ENCODE measurements at regions of chr11 and their contacts with region 1.

Region 1: GRCh38 chr11:6531267-6531752 is 34.2 kb downstream of the DNHD1 start:
- DNase-seq: no peak
- H3K4me3 ChIP-seq: no peak overlapping the region
- H3K27ac ChIP-seq: no peak overlapping the region; the same call in 1 of the 2 replicates
- H3K4me1 ChIP-seq: no peaks in the 10 kb centered on the region
- H3K27me3 ChIP-seq: no peaks in the 10 kb centered on the region
- CTCF ChIP-seq: peak in 2 of 3 experiments; percentile 76 to 80; a peak in 3 of 4 replicates
- EP300 ChIP-seq: no peak
- POLR2A ChIP-seq: no peak
- RAD21 ChIP-seq: peak; percentile 81 to 84

Region 2: GRCh38 chr11:6362873-6363678 is 168.2 kb before region 1 on chr11:
- CTCF ChIA-PET with region 1: no interaction called
- POLR2A ChIA-PET with region 1: no interaction called
- DNase-seq: peak; percentile 73 to 87
- H3K4me3 ChIP-seq: no peak overlapping the region
- H3K27ac ChIP-seq: no peak overlapping the region
- H3K4me1 ChIP-seq: peaks cover 0 to 4% (median 0%) of the 10 kb centered on the region in 4 experiments; a peak in 1 of 7 replicates
- H3K27me3 ChIP-seq: no peaks in the 10 kb centered on the region
- CTCF ChIP-seq: peak; percentile 97 to 99 (median 99)
- EP300 ChIP-seq: no peak
- POLR2A ChIP-seq: no peak
- RAD21 ChIP-seq: peak; percentile 96 to 98

Region 3: DNA sequence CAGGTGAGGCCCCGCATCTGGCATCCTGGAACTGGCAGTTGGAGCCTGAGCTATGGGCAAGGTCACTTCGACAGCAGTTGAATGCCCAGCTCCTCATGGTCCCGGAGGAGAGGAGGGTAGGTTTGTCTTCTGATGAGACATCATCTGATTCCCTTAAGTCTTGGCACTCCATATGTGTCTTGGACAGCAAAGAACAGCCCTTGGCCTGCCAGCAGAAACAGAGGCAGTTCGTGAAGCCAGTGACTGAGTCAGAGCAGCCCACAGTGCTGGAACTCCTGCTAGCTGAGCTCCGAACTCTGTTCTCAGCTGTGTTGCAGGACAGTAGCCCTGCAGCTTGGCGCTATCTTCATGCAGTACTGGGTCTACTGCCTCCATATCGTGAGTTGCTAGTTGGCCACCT is 33.2 kb before region 1 on chr11:
- CTCF ChIA-PET with region 1: interaction called, 14 read pairs
- POLR2A ChIA-PET with region 1: interaction called, 3 read pairs
- DNase-seq: no peak
- H3K4me3 ChIP-seq: no peak overlapping the region
- H3K27ac ChIP-seq: no peak overlapping the region
- H3K4me1 ChIP-seq: peaks cover 0 to 6% (median 1%) of the 10 kb centered on the region in 4 experiments; a peak in 4 of 7 replicates
- H3K27me3 ChIP-seq: no peaks in the 10 kb centered on the region
- CTCF ChIP-seq: no peak
- EP300 ChIP-seq: no peak
- POLR2A ChIP-seq: no peak
- RAD21 ChIP-seq: no peak

Region 4: DNA sequence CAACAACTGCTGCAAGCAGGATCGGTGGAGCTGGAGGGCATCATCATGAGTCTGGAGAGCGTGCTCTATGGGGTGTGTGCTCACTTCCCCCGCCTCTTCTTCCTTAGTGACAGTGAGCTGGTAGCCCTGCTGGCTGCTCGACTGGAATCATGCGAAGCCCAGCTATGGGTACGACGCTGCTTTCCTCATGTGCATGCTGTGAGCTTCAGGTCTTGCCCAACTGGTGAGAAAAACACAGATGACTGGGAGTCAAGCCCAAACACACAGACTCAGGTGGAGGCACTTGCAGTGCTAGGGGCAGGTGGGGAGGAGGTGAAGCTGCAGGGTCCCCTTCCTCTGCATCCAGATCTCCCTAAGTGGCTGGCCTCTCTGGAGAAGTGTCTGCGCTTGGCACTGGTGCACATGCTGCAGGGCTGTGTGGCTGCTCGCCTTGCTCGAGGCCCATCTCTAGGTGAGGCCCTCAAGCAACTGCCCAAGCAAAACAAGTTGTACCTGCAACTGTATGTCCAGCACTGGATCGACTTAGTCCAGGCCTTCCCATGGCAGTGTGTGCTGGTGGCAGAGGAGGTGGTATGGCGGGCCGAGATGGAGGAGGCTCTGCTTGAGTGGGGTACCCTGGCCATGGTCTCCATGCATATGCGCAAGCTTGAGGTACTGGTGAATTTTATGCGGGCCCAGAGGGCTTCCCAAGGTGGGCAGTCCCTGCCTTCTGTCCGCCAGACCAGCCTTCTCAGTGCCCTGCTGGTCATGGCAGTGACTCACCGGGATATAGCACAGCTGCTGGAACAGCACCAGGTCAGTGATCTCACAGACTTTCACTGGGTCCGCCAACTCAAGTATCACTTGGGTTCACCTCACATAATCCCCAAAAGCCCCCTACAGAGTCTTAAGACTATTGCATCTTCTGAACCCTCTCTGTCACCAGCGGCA is 13.9 kb after region 1 on chr11:
- CTCF ChIA-PET with region 1: interaction called, 64 read pairs
- POLR2A ChIA-PET with region 1: no interaction called
- DNase-seq: no peak
- H3K4me3 ChIP-seq: no peak overlapping the region
- H3K27ac ChIP-seq: no peak overlapping the region; the same call in 1 of the 2 replicates
- H3K4me1 ChIP-seq: no peaks in the 10 kb centered on the region
- H3K27me3 ChIP-seq: no peaks in the 10 kb centered on the region
- CTCF ChIP-seq: no peak
- EP300 ChIP-seq: no peak
- POLR2A ChIP-seq: no peak
- RAD21 ChIP-seq: no peak

Region 5: DNA sequence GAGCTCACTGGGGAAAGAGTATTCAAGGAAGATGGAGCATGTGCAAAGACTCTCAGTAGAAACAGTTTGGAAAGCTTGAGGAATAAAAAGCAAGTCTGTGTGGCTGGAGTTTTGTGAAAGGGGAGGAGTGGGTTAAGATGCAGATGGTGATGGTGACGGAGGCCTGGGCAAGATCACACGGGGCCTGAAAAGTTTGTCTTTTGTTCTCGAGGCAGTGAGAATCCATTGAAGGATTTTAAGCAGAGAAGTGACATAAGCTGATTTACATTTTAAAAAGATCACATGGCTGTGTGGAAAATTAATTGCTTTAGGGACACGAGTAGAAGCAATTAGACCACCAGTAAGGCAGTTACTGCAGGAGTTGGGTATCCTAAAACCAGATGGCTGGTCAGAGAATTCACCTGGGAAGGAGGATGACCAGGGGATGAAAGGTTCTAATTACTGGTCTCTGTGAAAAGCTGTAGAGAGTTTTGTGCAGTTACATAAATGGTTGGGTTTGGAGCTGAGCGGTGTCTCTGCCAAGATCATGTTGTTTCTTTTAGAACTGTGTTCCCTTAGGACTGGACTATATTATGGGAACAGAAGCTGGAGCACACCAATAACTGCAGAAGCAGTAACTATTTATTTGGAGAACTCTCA is 65.0 kb after region 1 on chr11:
- CTCF ChIA-PET with region 1: interaction called, 12 read pairs
- POLR2A ChIA-PET with region 1: interaction called, 3 read pairs
- DNase-seq: peak in 1 of 2 experiments; percentile 16
- H3K4me3 ChIP-seq: no peak overlapping the region
- H3K27ac ChIP-seq: no peak overlapping the region
- H3K4me1 ChIP-seq: no peaks in the 10 kb centered on the region
- H3K27me3 ChIP-seq: no peaks in the 10 kb centered on the region
- CTCF ChIP-seq: no peak
- EP300 ChIP-seq: no peak
- POLR2A ChIP-seq: no peak
- RAD21 ChIP-seq: no peak

Region 6: GRCh38 chr11:6655020-6655789 is 123.9 kb after region 1 on chr11:
- CTCF ChIA-PET with region 1: interaction called, 10 read pairs
- POLR2A ChIA-PET with region 1: no interaction called
- DNase-seq: peak in 1 of 2 experiments; percentile 52
- H3K4me3 ChIP-seq: peak overlapping the region; percentile 30 to 65 (median 46)
- H3K27ac ChIP-seq: no peak overlapping the region
- H3K4me1 ChIP-seq: peaks cover 0 to 7% (median 6%) of the 10 kb centered on the region in 4 experiments; a peak in 4 of 7 replicates
- H3K27me3 ChIP-seq: peaks cover 1 to 36% (median 32%) of the 10 kb centered on the region in 4 experiments
- CTCF ChIP-seq: no peak
- EP300 ChIP-seq: no peak
- POLR2A ChIP-seq: no peak
- RAD21 ChIP-seq: no peak

Measured in H1 (cell line).